ENCODE measurements at regions of chr6 and their contacts with region 1.

Region 1: GRCh38 chr6:137866914-137867684 is at the start of gene TNFAIP3:
- DNase-seq: peak; percentile 91 to 93
- H3K4me3 ChIP-seq: peak within 1 kb of the TSS; percentile 76
- H3K4me3 Mint-ChIP-seq: peak within 1 kb of the TSS; percentile 94
- H3K27ac Mint-ChIP-seq: peak within 1 kb of the TSS; percentile 97
- H3K4me1 ChIP-seq: peaks cover 36% of the 10 kb centered on the region
- H3K4me1 Mint-ChIP-seq: peaks cover 17% of the 10 kb centered on the region
- H3K27me3 ChIP-seq: no peaks in the 10 kb centered on the region
- H3K27me3 Mint-ChIP-seq: no peaks in the 10 kb centered on the region
- CTCF ChIP-seq: peak; percentile 69 to 78
- total RNA-seq, gene TNFAIP3: 45.7 and 50.4 TPM in 2 replicates

Region 2: DNA sequence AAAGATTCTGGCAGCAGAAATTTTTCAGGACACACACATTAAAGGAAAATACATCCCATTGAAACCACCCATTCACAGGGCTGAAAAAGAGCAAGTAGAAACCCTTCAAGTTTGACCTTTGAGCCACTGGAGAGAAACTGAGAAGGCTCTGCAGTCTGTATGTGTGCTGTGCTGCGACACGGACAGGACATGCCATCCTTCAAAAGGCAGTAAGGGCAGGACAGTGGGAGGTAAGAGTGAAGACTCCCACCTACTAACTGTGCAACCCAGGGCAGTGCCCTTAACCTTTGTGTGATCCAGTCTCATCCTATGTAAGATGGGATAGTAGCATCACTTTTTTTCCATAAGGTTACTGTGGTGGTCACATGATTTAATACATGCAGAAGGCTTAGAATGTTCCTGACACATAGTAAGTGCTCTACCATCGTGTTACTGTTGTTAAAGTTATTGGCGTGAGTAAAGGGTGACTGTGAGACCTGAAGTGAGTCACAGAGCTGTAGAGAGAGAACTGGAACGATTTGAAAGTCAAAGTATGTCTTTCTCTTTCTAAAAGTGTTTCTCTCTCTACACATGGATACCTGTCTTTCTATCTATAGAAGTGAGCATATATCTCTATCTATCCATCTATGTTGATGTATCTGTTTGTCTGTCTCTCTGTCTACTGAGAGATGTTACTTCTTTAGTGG is 219.2 kb before region 1 on chr6:
- CTCF ChIA-PET with region 1: no interaction called
- POLR2A ChIA-PET with region 1: interaction called, 3 read pairs
- intact Hi-C with region 1: loop called (anchors 5 kb)
- DNase-seq: no peak
- H3K4me3 ChIP-seq: no peak overlapping the region
- H3K4me3 Mint-ChIP-seq: peak overlapping the region; percentile 66
- H3K27ac Mint-ChIP-seq: peak overlapping the region; percentile 90
- H3K4me1 ChIP-seq: peaks cover 36% of the 10 kb centered on the region
- H3K4me1 Mint-ChIP-seq: peaks cover 35% of the 10 kb centered on the region
- H3K27me3 ChIP-seq: no peaks in the 10 kb centered on the region
- H3K27me3 Mint-ChIP-seq: no peaks in the 10 kb centered on the region
- CTCF ChIP-seq: no peak

Region 3: GRCh38 chr6:137707590-137708360 is 159.3 kb before region 1 on chr6:
- CTCF ChIA-PET with region 1: interaction called, 12 read pairs
- POLR2A ChIA-PET with region 1: no interaction called
- intact Hi-C with region 1: loop called (anchors 1 kb)
- DNase-seq: peak; percentile 73 to 88
- H3K4me3 ChIP-seq: no peak overlapping the region
- H3K4me3 Mint-ChIP-seq: peak overlapping the region; percentile 62
- H3K27ac Mint-ChIP-seq: peak overlapping the region; percentile 89
- H3K4me1 ChIP-seq: peaks cover 22% of the 10 kb centered on the region
- H3K4me1 Mint-ChIP-seq: peaks cover 36% of the 10 kb centered on the region
- H3K27me3 ChIP-seq: no peaks in the 10 kb centered on the region
- H3K27me3 Mint-ChIP-seq: no peaks in the 10 kb centered on the region
- CTCF ChIP-seq: peak; percentile 67 to 80

Region 4: GRCh38 chr6:137794516-137795201 is 72.4 kb before region 1 on chr6:
- CTCF ChIA-PET with region 1: interaction called, 6 read pairs
- POLR2A ChIA-PET with region 1: interaction called, 4 read pairs
- intact Hi-C with region 1: loop called (anchors 2 kb)
- DNase-seq: peak; percentile 63 to 70
- H3K4me3 ChIP-seq: no peak overlapping the region
- H3K4me3 Mint-ChIP-seq: peak overlapping the region; percentile 53
- H3K27ac Mint-ChIP-seq: peak overlapping the region; percentile 87
- H3K4me1 ChIP-seq: peaks cover 69% of the 10 kb centered on the region
- H3K4me1 Mint-ChIP-seq: peaks cover 45% of the 10 kb centered on the region
- H3K27me3 ChIP-seq: no peaks in the 10 kb centered on the region
- H3K27me3 Mint-ChIP-seq: no peaks in the 10 kb centered on the region
- CTCF ChIP-seq: no peak

Region 5: DNA sequence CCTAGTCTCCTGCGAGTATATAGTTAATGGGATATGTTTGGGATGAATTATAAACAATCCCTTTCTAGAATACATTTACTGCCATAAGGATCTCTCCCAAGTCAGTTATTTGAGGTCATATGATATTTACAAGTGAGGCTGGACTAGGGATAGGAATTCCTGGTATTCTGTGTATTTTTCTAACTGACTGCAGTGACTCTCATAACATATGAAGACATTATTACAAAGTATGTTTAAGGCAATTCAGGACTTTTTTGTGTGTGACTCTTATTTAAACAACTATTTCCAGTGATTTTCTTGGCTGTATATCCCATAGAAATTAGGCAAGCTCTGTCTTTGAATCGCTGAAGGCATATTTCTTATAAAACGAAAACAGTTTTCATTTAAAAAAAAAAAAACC is 18.4 kb before region 1 on chr6:
- CTCF ChIA-PET with region 1: interaction called, 3 read pairs
- POLR2A ChIA-PET with region 1: no interaction called
- intact Hi-C with region 1: loop called (anchors 1 kb)
- DNase-seq: no peak
- H3K4me3 ChIP-seq: no peak overlapping the region
- H3K4me3 Mint-ChIP-seq: peak overlapping the region; percentile 14
- H3K27ac Mint-ChIP-seq: no peak overlapping the region
- H3K4me1 ChIP-seq: peaks cover 34% of the 10 kb centered on the region
- H3K4me1 Mint-ChIP-seq: no peaks in the 10 kb centered on the region
- H3K27me3 ChIP-seq: no peaks in the 10 kb centered on the region
- H3K27me3 Mint-ChIP-seq: no peaks in the 10 kb centered on the region
- CTCF ChIP-seq: no peak

Region 6: DNA sequence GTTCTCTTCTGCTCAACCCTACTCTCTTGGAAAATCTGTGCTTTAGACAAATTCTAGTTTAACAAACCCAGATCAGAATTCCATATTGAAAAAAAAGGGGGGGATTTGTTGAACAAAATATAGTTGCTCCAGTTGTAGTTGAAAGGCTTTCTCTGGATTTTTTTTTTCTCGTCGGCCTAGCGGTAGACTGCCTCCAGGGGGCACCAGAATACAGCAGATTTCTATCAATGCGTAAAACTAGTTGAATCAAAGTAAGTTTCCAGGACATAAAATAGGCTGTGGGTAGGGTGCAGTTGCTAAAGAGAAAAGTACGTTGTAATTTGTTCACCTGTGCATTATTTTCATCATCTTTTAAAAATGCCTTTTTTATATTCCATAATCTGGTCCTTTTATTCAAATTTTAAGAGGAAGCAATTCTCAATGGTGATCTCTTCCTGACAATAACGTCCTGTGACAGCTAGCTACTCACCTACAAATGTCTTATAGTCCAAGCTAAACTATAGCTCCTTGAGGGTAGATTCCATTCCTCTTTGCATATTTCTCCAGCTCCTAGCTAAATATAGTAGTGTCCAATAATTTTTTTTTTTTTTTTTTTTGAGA is 134.8 kb after region 1 on chr6:
- CTCF ChIA-PET with region 1: interaction called, 3 read pairs
- POLR2A ChIA-PET with region 1: no interaction called
- intact Hi-C with region 1: loop called (anchors 2 kb)
- DNase-seq: peak; percentile 53 to 69
- H3K4me3 ChIP-seq: no peak overlapping the region
- H3K4me3 Mint-ChIP-seq: no peak overlapping the region
- H3K27ac Mint-ChIP-seq: no peak overlapping the region
- H3K4me1 ChIP-seq: peaks cover 2% of the 10 kb centered on the region; the same call in 1 of the 2 replicates
- H3K4me1 Mint-ChIP-seq: peaks cover 9% of the 10 kb centered on the region
- H3K27me3 ChIP-seq: no peaks in the 10 kb centered on the region
- H3K27me3 Mint-ChIP-seq: no peaks in the 10 kb centered on the region
- CTCF ChIP-seq: peak; percentile 87

Measured in Caco-2 (cell line).